ENCODE measurements at regions of chr10 and their contacts with region 1.

Region 1: GRCh38 chr10:28179006-28179742 is 123.7 kb downstream of the MPP7 start:
- DNase-seq: peak; percentile 71
- H3K4me3 ChIP-seq: no peak overlapping the region
- H3K27ac ChIP-seq: no peak overlapping the region
- H3K4me1 ChIP-seq: peaks cover 13% of the 10 kb centered on the region
- H3K27me3 ChIP-seq: no peaks in the 10 kb centered on the region
- CTCF ChIP-seq: peak; percentile 37 to 40
- POLR2A ChIP-seq: no peak

Region 2: GRCh38 chr10:27742195-27743011 is 436.8 kb before region 1 on chr10:
- CTCF ChIA-PET with region 1: interaction called, 40 read pairs
- POLR2A ChIA-PET with region 1: no interaction called
- dilution Hi-C with region 1: no loop called
- intact Hi-C with region 1: loop called (anchors 1 kb)
- DNase-seq: peak; percentile 66
- H3K4me3 ChIP-seq: peak overlapping the region; percentile 47 to 50 (median 48)
- H3K27ac ChIP-seq: no peak overlapping the region
- H3K4me1 ChIP-seq: peaks cover 25% of the 10 kb centered on the region
- H3K27me3 ChIP-seq: peaks cover 63 to 94% of the 10 kb centered on the region in 2 experiments
- CTCF ChIP-seq: peak; percentile 79 to 84
- POLR2A ChIP-seq: no peak

Region 3: DNA sequence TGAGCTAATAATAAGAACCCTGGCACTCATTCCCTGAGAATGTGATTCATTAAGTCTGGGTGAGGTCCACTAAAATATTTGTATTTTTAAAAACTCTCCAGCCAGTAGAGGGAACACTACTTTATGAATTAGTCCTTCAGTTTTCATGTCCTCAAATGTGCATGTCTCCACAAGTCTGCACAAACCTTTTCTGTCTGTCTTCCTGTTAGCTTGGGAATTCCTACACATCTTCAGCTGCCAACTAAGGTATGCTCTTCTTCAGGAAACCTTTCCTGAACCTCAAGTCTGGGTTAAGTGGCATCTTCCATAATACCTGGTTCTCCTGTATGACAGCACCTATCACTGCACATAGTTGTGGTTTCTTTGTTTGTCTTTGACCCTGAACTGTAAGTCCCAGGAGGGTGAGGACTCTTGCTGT is 313.9 kb before region 1 on chr10:
- CTCF ChIA-PET with region 1: interaction called, 11 read pairs
- POLR2A ChIA-PET with region 1: no interaction called
- dilution Hi-C with region 1: no loop called
- intact Hi-C with region 1: no loop called
- DNase-seq: peak; percentile 4
- H3K4me3 ChIP-seq: no peak overlapping the region
- H3K27ac ChIP-seq: no peak overlapping the region
- H3K4me1 ChIP-seq: no peaks in the 10 kb centered on the region
- H3K27me3 ChIP-seq: no peaks in the 10 kb centered on the region
- CTCF ChIP-seq: no peak
- POLR2A ChIP-seq: no peak

Region 4: GRCh38 chr10:28008054-28008453 is 171.1 kb before region 1 on chr10:
- CTCF ChIA-PET with region 1: interaction called, 12 read pairs
- POLR2A ChIA-PET with region 1: no interaction called
- dilution Hi-C with region 1: no loop called
- intact Hi-C with region 1: no loop called
- DNase-seq: peak; percentile 48
- H3K4me3 ChIP-seq: no peak overlapping the region
- H3K27ac ChIP-seq: peak overlapping the region; percentile 53
- H3K4me1 ChIP-seq: peaks cover 19% of the 10 kb centered on the region
- H3K27me3 ChIP-seq: no peaks in the 10 kb centered on the region
- CTCF ChIP-seq: no peak
- POLR2A ChIP-seq: no peak

Region 5: GRCh38 chr10:28241741-28242399 is 62.7 kb after region 1 on chr10:
- CTCF ChIA-PET with region 1: interaction called, 40 read pairs
- POLR2A ChIA-PET with region 1: no interaction called
- dilution Hi-C with region 1: no loop called
- intact Hi-C with region 1: loop called (anchors 1 kb)
- DNase-seq: peak; percentile 65
- H3K4me3 ChIP-seq: no peak overlapping the region
- H3K27ac ChIP-seq: no peak overlapping the region
- H3K4me1 ChIP-seq: no peaks in the 10 kb centered on the region
- H3K27me3 ChIP-seq: peaks cover 10 to 16% of the 10 kb centered on the region in 2 experiments
- CTCF ChIP-seq: peak; percentile 71 to 78
- POLR2A ChIP-seq: no peak

Region 6: GRCh38 chr10:28365840-28366239 is 186.7 kb after region 1 on chr10:
- CTCF ChIA-PET with region 1: no interaction called
- POLR2A ChIA-PET with region 1: no interaction called
- dilution Hi-C with region 1: no loop called
- intact Hi-C with region 1: no loop called
- DNase-seq: no peak
- H3K4me3 ChIP-seq: no peak overlapping the region
- H3K27ac ChIP-seq: no peak overlapping the region
- H3K4me1 ChIP-seq: no peaks in the 10 kb centered on the region
- H3K27me3 ChIP-seq: peaks cover 0 to 2% of the 10 kb centered on the region in 2 experiments
- CTCF ChIP-seq: no peak
- POLR2A ChIP-seq: no peak